SK-N-SH (cell line): ENCODE measurements at regions of chr5 and their contacts with region 1.

Region 1: GRCh38 chr5:147369742-147370374 is 135.0 kb downstream of the STK32A start:
- DNase-seq: no peak
- H3K4me3 ChIP-seq: no peak overlapping the region
- H3K27ac ChIP-seq: peak overlapping the region in 1 of 2 experiments; percentile 34; a peak in 1 of 4 replicates
- H3K4me1 ChIP-seq: no peaks in the 10 kb centered on the region; a peak in 1 of 4 replicates
- H3K27me3 ChIP-seq: no peaks in the 10 kb centered on the region
- CTCF ChIP-seq: peak; percentile 94
- EP300 ChIP-seq: no peak
- RAD21 ChIP-seq: peak; percentile 84

Region 2: DNA sequence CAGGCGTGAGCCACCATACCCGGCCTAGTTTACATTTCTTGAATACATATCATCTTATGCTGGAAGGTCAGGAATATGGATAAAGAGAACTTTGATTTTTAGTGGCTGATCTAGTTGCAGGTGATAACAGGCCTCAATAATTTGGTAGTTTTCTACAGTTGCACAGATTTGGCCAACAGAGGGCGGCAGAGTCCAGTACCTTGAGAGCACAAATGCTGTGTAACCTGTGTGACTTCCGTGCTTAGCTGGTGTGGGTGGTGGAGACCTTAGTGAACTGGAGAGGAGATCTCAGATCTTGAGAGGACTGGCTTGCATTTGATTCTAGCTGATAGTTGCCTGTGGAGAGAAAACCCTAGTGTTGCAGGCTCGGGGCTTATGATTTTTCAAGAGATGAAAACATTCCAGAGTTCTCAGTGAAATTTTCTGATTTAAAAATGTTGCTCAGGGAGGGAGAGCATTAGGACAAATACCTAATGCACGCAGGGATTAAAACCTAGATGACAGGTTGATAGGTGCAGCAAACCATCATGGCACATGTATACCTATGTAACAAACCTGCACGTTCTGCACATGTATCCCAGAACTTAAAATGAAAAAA is 836.5 kb before region 1 on chr5:
- CTCF ChIA-PET with region 1: interaction called, 34 read pairs
- POLR2A ChIA-PET with region 1: no interaction called
- DNase-seq: peak; percentile 71
- H3K4me3 ChIP-seq: no peak overlapping the region; a peak in 1 of 4 replicates
- H3K27ac ChIP-seq: no peak overlapping the region
- H3K4me1 ChIP-seq: no peaks in the 10 kb centered on the region
- H3K27me3 ChIP-seq: no peaks in the 10 kb centered on the region
- CTCF ChIP-seq: peak; percentile 93
- EP300 ChIP-seq: no peak
- RAD21 ChIP-seq: peak; percentile 95

Region 3: DNA sequence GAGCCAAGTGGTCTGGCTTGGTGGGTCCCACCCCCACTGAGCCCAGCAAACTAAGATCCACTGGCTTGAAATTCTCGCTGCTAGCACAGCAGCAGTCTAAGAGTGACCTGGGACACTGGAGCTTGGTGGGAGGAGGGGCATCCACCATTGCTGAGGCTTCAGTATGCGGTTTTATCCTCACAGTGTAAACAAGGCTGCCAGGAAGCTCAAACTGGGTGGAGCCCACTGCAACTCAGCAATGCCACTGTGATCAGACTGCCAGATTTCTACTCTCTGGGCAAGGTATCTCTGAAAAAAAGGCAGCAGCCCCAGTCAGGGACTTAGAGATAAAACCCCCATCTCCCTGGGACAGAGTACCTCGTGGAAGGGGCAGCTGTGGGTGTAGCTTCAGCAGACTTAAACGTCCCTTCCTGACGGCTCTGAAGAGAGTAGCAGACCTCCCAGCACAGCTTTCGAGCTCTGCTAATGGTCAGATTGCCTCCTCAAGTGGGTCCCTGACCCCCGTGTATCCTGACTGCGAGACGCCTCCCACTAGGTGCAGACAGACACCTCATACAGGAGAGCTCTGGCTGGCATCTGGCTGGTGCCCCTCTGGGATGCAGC is 153.2 kb before region 1 on chr5:
- CTCF ChIA-PET with region 1: interaction called, 57 read pairs
- POLR2A ChIA-PET with region 1: no interaction called
- DNase-seq: no peak
- H3K4me3 ChIP-seq: no peak overlapping the region
- H3K27ac ChIP-seq: no peak overlapping the region
- H3K4me1 ChIP-seq: peaks cover 0 to 3% of the 10 kb centered on the region in 2 experiments; a peak in 3 of 4 replicates
- H3K27me3 ChIP-seq: no peaks in the 10 kb centered on the region
- CTCF ChIP-seq: no peak
- EP300 ChIP-seq: no peak
- RAD21 ChIP-seq: no peak

Region 4: GRCh38 chr5:147223948-147224791 is 145.7 kb before region 1 on chr5:
- CTCF ChIA-PET with region 1: interaction called, 57 read pairs
- POLR2A ChIA-PET with region 1: no interaction called
- DNase-seq: peak; percentile 69
- H3K4me3 ChIP-seq: no peak overlapping the region
- H3K27ac ChIP-seq: no peak overlapping the region
- H3K4me1 ChIP-seq: no peaks in the 10 kb centered on the region; a peak in 2 of 4 replicates
- H3K27me3 ChIP-seq: no peaks in the 10 kb centered on the region
- CTCF ChIP-seq: peak; percentile 84
- EP300 ChIP-seq: no peak
- RAD21 ChIP-seq: peak; percentile 84

Region 5: GRCh38 chr5:147234825-147235635 is 134.8 kb before region 1 on chr5 and contains the start of gene STK32A:
- CTCF ChIA-PET with region 1: interaction called, 11 read pairs
- POLR2A ChIA-PET with region 1: no interaction called
- DNase-seq: peak; percentile 80
- H3K4me3 ChIP-seq: peak within 1 kb of the TSS; percentile 67 to 78
- H3K27ac ChIP-seq: no peak within 1 kb of the TSS; a peak in 1 of 4 replicates
- H3K4me1 ChIP-seq: no peaks in the 10 kb centered on the region; a peak in 1 of 4 replicates
- H3K27me3 ChIP-seq: no peaks in the 10 kb centered on the region
- CTCF ChIP-seq: peak; percentile 30; the same call in 1 of the 2 replicates
- EP300 ChIP-seq: no peak
- RAD21 ChIP-seq: peak; percentile 45
- polyA plus RNA-seq, gene STK32A: 0.18 and 0.20 TPM in 2 replicates

Region 6: GRCh38 chr5:147391781-147392180 is 21.9 kb after region 1 on chr5:
- CTCF ChIA-PET with region 1: interaction called, 20 read pairs
- POLR2A ChIA-PET with region 1: no interaction called
- DNase-seq: peak; percentile 60
- H3K4me3 ChIP-seq: no peak overlapping the region; a peak in 1 of 4 replicates
- H3K27ac ChIP-seq: no peak overlapping the region; a peak in 1 of 4 replicates
- H3K4me1 ChIP-seq: peaks cover 0 to 33% of the 10 kb centered on the region in 2 experiments; a peak in 2 of 4 replicates
- H3K27me3 ChIP-seq: no peaks in the 10 kb centered on the region
- CTCF ChIP-seq: peak; percentile 59
- EP300 ChIP-seq: no peak
- RAD21 ChIP-seq: peak; percentile 76

Region 7: GRCh38 chr5:147558826-147559225 is 189.0 kb after region 1 on chr5:
- CTCF ChIA-PET with region 1: interaction called, 17 read pairs
- POLR2A ChIA-PET with region 1: no interaction called
- DNase-seq: peak; percentile 66
- H3K4me3 ChIP-seq: no peak overlapping the region
- H3K27ac ChIP-seq: no peak overlapping the region
- H3K4me1 ChIP-seq: peaks cover 5 to 13% of the 10 kb centered on the region in 2 experiments; a peak in 2 of 4 replicates
- H3K27me3 ChIP-seq: no peaks in the 10 kb centered on the region
- CTCF ChIP-seq: peak; percentile 88
- EP300 ChIP-seq: no peak
- RAD21 ChIP-seq: peak; percentile 94

Region 8: DNA sequence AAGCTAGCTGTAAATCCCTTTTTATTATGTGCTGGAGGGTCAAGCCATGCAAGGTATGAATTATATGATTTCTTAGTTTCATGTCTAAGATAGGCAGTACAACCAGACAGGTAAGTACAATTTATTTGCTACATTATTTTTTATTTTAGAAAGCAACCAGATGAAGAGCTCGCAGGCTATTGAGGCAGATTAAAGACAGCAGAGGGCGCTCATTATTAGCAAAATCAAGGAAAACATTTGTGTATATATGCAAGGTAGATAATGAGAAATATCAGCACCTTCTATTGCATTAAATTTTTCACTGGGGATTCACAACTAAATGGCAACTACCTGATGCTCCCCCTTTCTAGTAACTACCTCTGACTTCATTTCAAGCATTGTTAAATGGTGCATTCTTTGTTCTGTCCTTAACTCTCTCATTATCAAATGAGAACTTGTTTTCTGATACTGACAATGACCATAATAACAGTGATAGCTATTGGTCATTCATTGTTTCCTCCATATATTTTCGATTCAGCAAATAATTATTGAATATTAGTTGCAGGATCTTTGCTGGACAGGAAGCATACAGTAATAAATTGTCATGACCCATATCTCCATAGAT is 517.3 kb after region 1 on chr5:
- CTCF ChIA-PET with region 1: no interaction called
- POLR2A ChIA-PET with region 1: no interaction called
- DNase-seq: peak; percentile 3
- H3K4me3 ChIP-seq: no peak overlapping the region; a peak in 1 of 4 replicates
- H3K27ac ChIP-seq: no peak overlapping the region; a peak in 1 of 4 replicates
- H3K4me1 ChIP-seq: no peaks in the 10 kb centered on the region; a peak in 1 of 4 replicates
- H3K27me3 ChIP-seq: no peaks in the 10 kb centered on the region
- CTCF ChIP-seq: peak; percentile 87
- EP300 ChIP-seq: no peak
- RAD21 ChIP-seq: peak; percentile 69